ENCODE measurements at regions of chrX and their contacts with region 1.

Region 1: GRCh38 chrX:76172325-76172893 is 453 bp upstream of the PBDC1 start:
- DNase-seq: no peak
- H3K4me3 Mint-ChIP-seq: peak overlapping the region; percentile 95
- H3K27ac Mint-ChIP-seq: peak overlapping the region; percentile 92
- H3K4me1 Mint-ChIP-seq: peaks cover 61% of the 10 kb centered on the region
- H3K27me3 Mint-ChIP-seq: no peaks in the 10 kb centered on the region

Region 2: GRCh38 chrX:76148753-76149152 is 23.7 kb before region 1 on chrX:
- CTCF ChIA-PET with region 1: interaction called, 6 read pairs
- POLR2A ChIA-PET with region 1: interaction called, 21 read pairs
- DNase-seq: peak; percentile 58
- H3K4me3 Mint-ChIP-seq: peak overlapping the region; percentile 81
- H3K27ac Mint-ChIP-seq: peak overlapping the region; percentile 100
- H3K4me1 Mint-ChIP-seq: peaks cover 22% of the 10 kb centered on the region
- H3K27me3 Mint-ChIP-seq: no peaks in the 10 kb centered on the region

Measured in activated CD4-positive, alpha-beta memory T cell treated with anti-CD3 and anti-CD28 coated beads, Interleukin-2, amount 10 ng/mL, durations not matched to agents 7 days and 5 days (primary cell).